Activated naive CD8-positive, alpha-beta T cell treated with anti-CD3 and anti-CD28 coated beads, Interleukin-2, amount 10 ng/mL, durations not matched to agents 7 days and 5 days (primary cell): ENCODE measurements at regions of chr9 and their contacts with region 1.

Region 1: GRCh38 chr9:127555768-127556397 is 56.2 kb upstream of the STXBP1 start:
- DNase-seq: peak; percentile 80
- ATAC-seq: peak; percentile 92
- H3K4me3 Mint-ChIP-seq: peak overlapping the region; percentile 85
- H3K27ac Mint-ChIP-seq: peak overlapping the region; percentile 94
- H3K4me1 Mint-ChIP-seq: peaks cover 62% of the 10 kb centered on the region
- H3K27me3 Mint-ChIP-seq: no peaks in the 10 kb centered on the region

Region 2: DNA sequence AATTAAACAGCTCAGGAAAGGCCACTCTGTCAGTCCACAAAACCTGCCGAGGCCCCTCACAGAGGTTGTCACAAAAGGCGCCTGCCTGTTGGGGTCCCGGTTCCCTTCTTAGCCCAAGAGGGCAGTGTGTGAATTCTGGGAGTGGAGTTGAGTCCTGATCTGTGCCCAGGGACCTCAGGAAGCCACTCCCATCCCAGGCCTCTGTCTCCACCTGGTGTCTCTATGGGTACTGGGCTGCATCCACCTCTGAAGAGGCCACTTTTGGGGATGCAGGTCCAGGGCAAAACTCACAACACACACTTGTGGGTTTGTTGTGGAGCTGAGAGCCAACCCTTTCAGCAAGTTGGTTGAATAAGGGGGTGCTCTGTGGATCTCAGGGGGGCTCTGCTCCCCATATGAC is 18.1 kb before region 1 on chr9:
- POLR2A ChIA-PET with region 1: no interaction called
- DNase-seq: no peak
- ATAC-seq: no peak
- H3K4me3 Mint-ChIP-seq: no peak overlapping the region
- H3K27ac Mint-ChIP-seq: no peak overlapping the region
- H3K4me1 Mint-ChIP-seq: peaks cover 7% of the 10 kb centered on the region
- H3K27me3 Mint-ChIP-seq: no peaks in the 10 kb centered on the region

Region 3: GRCh38 chr9:127568971-127569885 is 13.3 kb after region 1 on chr9:
- POLR2A ChIA-PET with region 1: interaction called, 84 read pairs
- DNase-seq: peak; percentile 89
- ATAC-seq: peak; percentile 75
- H3K4me3 Mint-ChIP-seq: peak overlapping the region; percentile 93
- H3K27ac Mint-ChIP-seq: peak overlapping the region; percentile 99
- H3K4me1 Mint-ChIP-seq: peaks cover 48% of the 10 kb centered on the region
- H3K27me3 Mint-ChIP-seq: no peaks in the 10 kb centered on the region

Region 4: DNA sequence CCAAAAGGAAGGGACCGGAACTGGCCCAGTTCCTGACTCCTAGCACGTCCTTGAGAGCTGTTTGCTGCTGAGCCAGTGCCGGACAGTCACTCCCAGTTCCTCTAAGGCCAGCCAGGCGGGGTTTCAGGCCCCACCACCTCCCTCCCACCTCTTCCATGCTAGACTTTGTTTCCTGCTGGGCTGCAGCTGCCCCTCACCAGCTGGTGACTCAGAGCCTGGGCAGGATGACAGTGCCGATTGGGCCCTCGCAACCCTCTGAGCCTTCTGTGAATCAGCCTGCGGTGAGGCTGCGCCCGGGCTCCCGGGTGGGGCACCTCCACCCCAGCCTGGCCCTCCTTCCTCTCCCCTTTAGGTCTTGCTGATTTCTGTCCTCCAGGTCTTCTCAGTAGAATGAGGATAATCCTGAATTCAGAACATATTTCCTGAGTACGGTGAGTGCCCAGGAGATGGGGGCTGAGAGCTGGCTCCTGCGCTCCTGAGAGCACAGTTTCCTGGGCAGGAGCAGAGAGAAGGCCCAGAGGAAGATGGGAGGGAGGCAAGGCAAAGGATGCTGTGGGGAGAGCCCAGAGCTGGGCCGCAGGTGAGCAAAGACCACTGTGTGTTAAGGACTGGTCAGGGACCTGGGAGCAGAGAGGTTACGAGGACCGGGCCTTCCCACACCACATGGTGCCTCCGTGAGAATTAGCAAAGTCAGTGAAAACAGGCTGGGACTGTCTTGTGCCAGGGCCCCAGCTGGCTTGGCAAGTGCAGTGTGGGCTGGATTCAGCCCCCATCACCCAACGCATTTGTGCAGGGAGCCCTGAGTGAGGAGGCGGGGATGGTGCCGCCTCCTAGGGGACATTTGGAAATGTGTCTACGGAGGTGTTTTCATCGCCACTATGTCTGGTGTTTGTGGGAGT is 23.3 kb after region 1 on chr9:
- POLR2A ChIA-PET with region 1: interaction called, 16 read pairs
- DNase-seq: peak; percentile 78
- ATAC-seq: peak; percentile 99
- H3K4me3 Mint-ChIP-seq: peak overlapping the region; percentile 76
- H3K27ac Mint-ChIP-seq: peak overlapping the region; percentile 90
- H3K4me1 Mint-ChIP-seq: peaks cover 41% of the 10 kb centered on the region
- H3K27me3 Mint-ChIP-seq: no peaks in the 10 kb centered on the region